ENCODE measurements at regions of chr3 and their contacts with region 1.

Region 1: GRCh38 chr3:171132873-171133272 is 106.4 kb upstream of the SLC2A2 start:
- DNase-seq: peak; percentile 68
- ATAC-seq: no peak
- H3K4me3 ChIP-seq: no peak overlapping the region
- H3K27ac ChIP-seq: no peak overlapping the region
- H3K4me1 ChIP-seq: peaks cover 19% of the 10 kb centered on the region
- H3K27me3 ChIP-seq: no peaks in the 10 kb centered on the region
- CTCF ChIP-seq: no peak

Region 2: GRCh38 chr3:169886671-169887070 is 1246.2 kb before region 1 on chr3:
- CTCF ChIA-PET with region 1: no interaction called
- POLR2A ChIA-PET with region 1: no interaction called
- intact Hi-C with region 1: no loop called
- DNase-seq: no peak
- ATAC-seq: no peak
- H3K4me3 ChIP-seq: no peak overlapping the region
- H3K27ac ChIP-seq: no peak overlapping the region
- H3K4me1 ChIP-seq: no peaks in the 10 kb centered on the region
- H3K27me3 ChIP-seq: no peaks in the 10 kb centered on the region
- CTCF ChIP-seq: no peak

Region 3: GRCh38 chr3:171712171-171712938 is 579.5 kb after region 1 on chr3:
- CTCF ChIA-PET with region 1: no interaction called
- POLR2A ChIA-PET with region 1: no interaction called
- intact Hi-C with region 1: no loop called
- DNase-seq: no peak
- ATAC-seq: no peak
- H3K4me3 ChIP-seq: no peak overlapping the region
- H3K27ac ChIP-seq: no peak overlapping the region
- H3K4me1 ChIP-seq: no peaks in the 10 kb centered on the region
- H3K27me3 ChIP-seq: no peaks in the 10 kb centered on the region
- CTCF ChIP-seq: no peak

Region 4: DNA sequence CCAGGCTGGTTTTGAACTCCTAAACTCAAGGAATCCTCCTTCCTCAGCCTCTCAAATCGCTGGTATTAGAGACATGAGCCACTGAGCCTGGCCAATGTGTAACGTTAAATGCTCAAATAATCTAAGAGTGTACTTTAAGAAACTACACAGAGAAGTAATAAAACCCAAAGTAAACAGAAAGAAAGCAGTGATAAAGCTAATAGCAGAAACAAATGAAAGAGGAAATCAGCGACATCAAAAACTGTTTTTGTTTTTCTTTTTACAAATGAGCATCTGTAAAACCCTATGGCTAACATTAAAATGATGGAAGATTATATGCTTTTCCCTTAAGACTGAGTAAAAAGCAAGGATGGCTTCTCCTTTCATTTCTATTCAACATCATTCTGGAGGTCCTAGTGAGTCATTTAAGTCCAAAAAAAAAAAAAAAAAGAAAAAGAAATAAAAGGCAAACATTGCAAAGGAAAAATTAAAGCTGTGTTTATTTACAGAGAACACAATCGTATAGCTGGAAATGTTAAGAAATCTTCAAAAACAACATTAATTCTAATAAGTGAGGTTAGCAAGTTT is 869.7 kb after region 1 on chr3:
- CTCF ChIA-PET with region 1: interaction called, 11 read pairs
- POLR2A ChIA-PET with region 1: no interaction called
- intact Hi-C with region 1: no loop called
- DNase-seq: no peak
- ATAC-seq: peak; percentile 81
- H3K4me3 ChIP-seq: 0 out of 2 replicates have a peak overlapping the region, but pooled peaks have one; percentile 4
- H3K27ac ChIP-seq: no peak overlapping the region
- H3K4me1 ChIP-seq: peaks cover 10% of the 10 kb centered on the region; the same call in 1 of the 2 replicates
- H3K27me3 ChIP-seq: no peaks in the 10 kb centered on the region
- CTCF ChIP-seq: no peak

Measured in PC-3 (cell line).